MCF 10A (cell line): ENCODE measurements at regions of chr10 and their contacts with region 1.

Region 1: DNA sequence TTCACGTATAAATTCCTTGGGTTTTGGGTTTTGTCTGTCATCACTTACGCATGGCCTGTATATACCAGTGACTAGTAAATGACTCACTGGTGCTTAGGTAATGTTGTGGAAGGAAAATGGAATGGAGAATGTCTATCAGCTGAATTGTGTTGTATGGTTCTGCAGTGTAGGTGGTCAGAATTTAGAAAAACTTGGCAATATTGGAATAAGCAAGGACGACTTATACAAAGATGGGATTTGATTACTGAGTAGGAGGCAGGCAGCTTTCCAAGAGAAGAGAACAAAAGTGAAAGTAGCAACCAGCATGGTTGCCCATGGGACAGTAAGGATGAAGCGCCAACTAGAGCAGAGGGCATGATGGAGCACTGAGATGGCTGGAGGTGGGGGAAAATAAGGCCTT is 168.6 kb upstream of the CSTF2T start:
- DNase-seq: peak; percentile 53
- H3K4me3 Mint-ChIP-seq: no peak overlapping the region
- H3K27ac Mint-ChIP-seq: no peak overlapping the region
- H3K4me1 Mint-ChIP-seq: peaks cover 5% of the 10 kb centered on the region
- H3K27me3 Mint-ChIP-seq: no peaks in the 10 kb centered on the region
- CTCF ChIP-seq: no peak

Region 2: DNA sequence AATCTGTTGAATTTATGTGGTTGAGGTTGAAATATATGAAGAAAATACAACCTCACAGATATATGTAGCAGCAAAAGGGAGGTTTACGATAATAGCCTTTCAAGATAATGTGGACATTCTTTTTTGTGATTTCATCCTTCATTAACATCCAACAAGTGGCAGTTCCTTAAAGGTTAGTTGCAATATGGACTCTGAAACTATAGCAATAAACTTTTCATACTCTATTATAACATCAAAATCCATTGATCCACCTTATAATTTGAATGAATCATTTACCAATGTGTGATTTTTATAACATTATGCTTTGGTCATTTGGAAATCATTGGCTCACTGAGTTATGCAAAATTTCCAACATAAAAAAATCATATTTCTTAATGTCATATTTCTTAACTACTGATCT is 32.2 kb after region 1 on chr10:
- CTCF ChIA-PET with region 1: no interaction called
- POLR2A ChIA-PET with region 1: no interaction called
- intact Hi-C with region 1: loop called (anchors 2 kb)
- DNase-seq: no peak
- H3K4me3 Mint-ChIP-seq: no peak overlapping the region
- H3K27ac Mint-ChIP-seq: no peak overlapping the region
- H3K4me1 Mint-ChIP-seq: peaks cover 7% of the 10 kb centered on the region
- H3K27me3 Mint-ChIP-seq: peaks cover 14% of the 10 kb centered on the region
- CTCF ChIP-seq: no peak